Stomach (tissue), 19 donors: ENCODE measurements at regions of chr10 and their contacts with region 1.

Region 1: DNA sequence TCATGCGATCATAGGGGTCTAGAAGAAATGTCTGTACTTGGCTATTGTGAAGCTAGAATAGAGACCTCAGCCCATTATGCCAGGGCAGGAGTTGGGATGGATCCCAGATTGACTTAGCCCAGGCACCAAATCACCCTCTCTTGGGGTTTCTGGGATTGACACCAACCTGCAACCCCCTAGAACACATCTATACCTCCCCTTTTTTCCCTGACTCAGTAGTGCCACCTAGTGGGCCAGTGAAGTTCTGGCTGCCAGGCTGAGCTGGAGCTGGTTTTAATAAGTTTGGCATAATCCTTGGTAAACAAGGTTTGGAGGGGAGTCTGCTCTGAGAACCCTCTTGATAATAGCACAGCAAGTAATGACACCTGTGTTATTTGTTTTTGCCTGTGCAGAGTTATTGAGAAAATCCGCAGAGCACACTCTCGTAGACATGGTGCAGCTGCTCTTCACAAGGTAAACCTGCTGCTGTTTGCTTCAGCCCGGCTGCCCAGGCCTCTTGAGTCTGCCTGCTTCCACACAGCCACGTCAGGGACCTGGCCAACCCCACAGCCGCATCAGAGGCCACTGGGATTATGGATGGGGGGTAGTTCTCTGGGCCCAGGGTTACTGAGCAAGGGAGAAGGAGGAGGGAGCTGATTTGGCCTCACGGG is 43.3 kb upstream of the NFKB2 start:
- DNase-seq: peak; percentile 57 to 85
- H3K4me3 ChIP-seq: no peak overlapping the region
- H3K27ac ChIP-seq: no peak overlapping the region
- H3K4me1 ChIP-seq: peaks cover 0 to 8% (median 0%) of the 10 kb centered on the region in 4 donors
- H3K27me3 ChIP-seq: no peaks in the 10 kb centered on the region
- CTCF ChIP-seq: peak in 5 of 7 experiments; percentile 52 to 90 (median 85)
- EP300 ChIP-seq: no peak
- POLR2A ChIP-seq: no peak

Region 2: GRCh38 chr10:102167861-102168260 is 184.3 kb before region 1 on chr10:
- intact Hi-C with region 1: loop called (anchors 5 kb)
- DNase-seq: no peak
- H3K4me3 ChIP-seq: no peak overlapping the region
- H3K27ac ChIP-seq: no peak overlapping the region
- H3K4me1 ChIP-seq: peaks cover 0 to 13% (median 10%) of the 10 kb centered on the region in 4 donors
- H3K27me3 ChIP-seq: no peaks in the 10 kb centered on the region
- CTCF ChIP-seq: no peak
- EP300 ChIP-seq: no peak
- POLR2A ChIP-seq: no peak

Region 3: DNA sequence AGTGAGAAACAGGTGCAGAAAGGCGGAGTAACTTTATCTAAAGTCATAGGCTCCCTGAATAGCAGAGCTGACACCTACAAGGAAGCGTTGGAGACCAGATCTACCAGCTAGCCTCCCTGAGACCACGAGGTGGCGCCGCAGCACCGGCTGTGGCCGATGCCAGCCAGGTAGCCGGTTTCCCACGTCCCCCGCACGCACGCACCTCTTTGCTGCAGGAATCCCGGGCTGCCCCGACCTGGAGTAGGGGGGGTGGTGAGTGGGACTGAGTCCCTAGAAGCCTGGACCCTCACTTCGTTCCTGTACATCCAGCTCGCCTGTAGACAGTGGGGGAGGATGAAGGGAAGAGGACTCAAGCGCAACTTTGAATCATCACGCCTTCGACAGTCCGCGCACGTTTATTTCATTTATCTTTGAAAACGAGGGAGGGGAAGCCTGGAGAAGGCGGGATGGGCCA is 122.4 kb before region 1 on chr10:
- intact Hi-C with region 1: loop called (anchors 2 kb)
- DNase-seq: peak; percentile 92 to 95
- H3K4me3 ChIP-seq: peak overlapping the region; percentile 45 to 62 (median 54)
- H3K27ac ChIP-seq: no peak overlapping the region
- H3K4me1 ChIP-seq: peaks cover 26 to 47% (median 37%) of the 10 kb centered on the region in 4 donors
- H3K27me3 ChIP-seq: peaks cover 0 to 78% (median 35%) of the 10 kb centered on the region in 3 donors
- CTCF ChIP-seq: peak in 5 of 7 experiments; percentile 87 to 94 (median 88)
- EP300 ChIP-seq: no peak
- POLR2A ChIP-seq: no peak